Dorsolateral prefrontal cortex (tissue), 120 donors: ENCODE measurements at regions of chr1 and their contacts with region 1.

Region 1: GRCh38 chr1:41573785-41574713 is 89.6 kb upstream of the EDN2 start:
- DNase-seq: peak; percentile 74 to 90 (median 85)
- H3K4me3 ChIP-seq: peak overlapping the region in 1 of 59 donors; percentile 0
- H3K27ac ChIP-seq: peak overlapping the region in 9 of 59 donors; percentile 17 to 66 (median 41)
- H3K27me3 ChIP-seq: no peaks in the 10 kb centered on the region
- CTCF ChIP-seq: peak; percentile 50 to 97 (median 91)

Region 2: GRCh38 chr1:41622859-41623723 is 49.0 kb after region 1 on chr1:
- intact Hi-C with region 1: loop called in 1 of 2 experiments (anchors 5 kb)
- DNase-seq: no peak
- H3K4me3 ChIP-seq: peak overlapping the region in 1 of 59 donors; percentile 19
- H3K27ac ChIP-seq: peak overlapping the region in 3 of 59 donors; percentile 5 to 50 (median 33)
- H3K27me3 ChIP-seq: no peaks in the 10 kb centered on the region
- CTCF ChIP-seq: no peak

Region 3: GRCh38 chr1:41678111-41678878 is 104.2 kb after region 1 on chr1:
- intact Hi-C with region 1: no loop called
- DNase-seq: no peak
- H3K4me3 ChIP-seq: no peak overlapping the region
- H3K27ac ChIP-seq: peak overlapping the region in 1 of 59 donors; percentile 16
- H3K27me3 ChIP-seq: no peaks in the 10 kb centered on the region
- CTCF ChIP-seq: no peak

Region 4: GRCh38 chr1:41773144-41773591 is 199.1 kb after region 1 on chr1:
- intact Hi-C with region 1: loop called (anchors 2 to 5 kb)
- DNase-seq: peak in 1 of 10 donors; percentile 18
- H3K4me3 ChIP-seq: no peak overlapping the region
- H3K27ac ChIP-seq: peak overlapping the region in 5 of 59 donors; percentile 11 to 33 (median 24)
- H3K27me3 ChIP-seq: no peaks in the 10 kb centered on the region
- CTCF ChIP-seq: no peak

Region 5: DNA sequence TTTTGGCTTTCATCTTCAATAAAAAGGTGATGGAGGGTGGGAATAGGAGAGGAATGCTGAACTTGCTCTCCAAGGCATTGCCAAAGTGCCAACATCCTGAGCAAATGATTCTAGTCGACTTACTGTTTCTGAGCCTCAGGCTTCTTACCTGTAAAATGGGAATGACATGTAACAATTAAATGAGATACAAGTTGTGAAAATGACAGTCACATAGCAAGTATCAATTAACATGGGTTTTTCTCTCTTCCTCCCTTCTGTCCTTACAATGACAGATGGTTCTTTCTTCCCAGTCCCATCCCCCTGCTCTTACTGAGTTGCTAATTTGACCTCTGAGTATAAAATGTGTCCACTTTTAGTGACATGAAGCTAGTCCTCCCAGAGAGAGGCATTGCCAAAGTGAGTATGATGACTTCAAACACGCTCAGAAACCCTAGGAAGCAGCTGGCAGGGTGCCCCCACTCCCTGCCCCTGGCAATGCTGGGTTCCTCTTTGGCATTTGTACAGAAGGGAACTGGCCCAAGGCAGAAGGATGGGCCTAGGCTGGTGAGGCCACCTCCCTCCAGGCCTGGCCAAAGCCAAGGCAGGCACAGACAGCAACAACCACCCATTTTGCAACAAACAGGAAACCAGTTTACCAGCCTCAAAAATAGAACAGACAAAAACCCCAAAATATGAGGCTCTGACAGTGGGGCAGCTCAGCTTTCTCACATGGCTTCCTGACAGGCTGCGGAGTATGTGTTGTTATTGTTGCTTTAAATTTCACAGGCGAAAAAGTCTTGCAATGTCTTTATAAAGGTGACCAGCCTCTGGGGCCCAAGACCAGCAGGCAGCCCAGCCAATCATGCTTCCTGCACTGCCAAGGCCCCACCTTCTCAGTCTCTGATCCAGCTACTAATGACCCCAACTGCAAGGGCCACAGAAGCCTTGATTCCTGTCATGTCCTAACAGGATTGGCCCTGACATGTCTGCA is 228.8 kb after region 1 on chr1:
- intact Hi-C with region 1: loop called (anchors 5 kb)
- DNase-seq: peak in 9 of 10 donors; percentile 19 to 63 (median 56)
- H3K4me3 ChIP-seq: no peak overlapping the region
- H3K27ac ChIP-seq: peak overlapping the region in 30 of 59 donors; percentile 1 to 71 (median 36)
- H3K27me3 ChIP-seq: no peaks in the 10 kb centered on the region
- CTCF ChIP-seq: no peak

Region 6: GRCh38 chr1:42035830-42036604 is 462.0 kb after region 1 on chr1:
- intact Hi-C with region 1: loop called (anchors 10 kb)
- DNase-seq: peak; percentile 92 to 97 (median 96)
- H3K4me3 ChIP-seq: peak overlapping the region; percentile 53 to 98 (median 90)
- H3K27ac ChIP-seq: peak overlapping the region in 45 of 59 donors; percentile 3 to 85 (median 66)
- H3K27me3 ChIP-seq: no peaks in the 10 kb centered on the region
- CTCF ChIP-seq: peak in 3 of 56 donors; percentile 2 to 11 (median 10)